ENCODE measurements at regions of chr1 and their contacts with region 1.

Region 1: GRCh38 chr1:40531381-40532061 is at the start of gene ZNF684:
- DNase-seq: peak; percentile 91
- ATAC-seq: peak; percentile 98
- H3K4me3 Mint-ChIP-seq: peak within 1 kb of the TSS; percentile 93
- H3K27ac Mint-ChIP-seq: peak within 1 kb of the TSS; percentile 88
- H3K4me1 Mint-ChIP-seq: peaks cover 14% of the 10 kb centered on the region
- H3K27me3 Mint-ChIP-seq: peaks cover 7% of the 10 kb centered on the region
- CTCF ChIP-seq: no peak
- total RNA-seq, gene ZNF684: 4.2 to 4.4 TPM

Region 2: GRCh38 chr1:40519517-40519916 is 12.0 kb before region 1 on chr1:
- CTCF ChIA-PET with region 1: interaction called, 15 read pairs
- POLR2A ChIA-PET with region 1: interaction called, 4 read pairs
- intact Hi-C with region 1: no loop called
- DNase-seq: no peak
- ATAC-seq: no peak
- H3K4me3 Mint-ChIP-seq: no peak overlapping the region
- H3K27ac Mint-ChIP-seq: no peak overlapping the region
- H3K4me1 Mint-ChIP-seq: no peaks in the 10 kb centered on the region
- H3K27me3 Mint-ChIP-seq: peaks cover 2% of the 10 kb centered on the region
- CTCF ChIP-seq: no peak

Region 3: DNA sequence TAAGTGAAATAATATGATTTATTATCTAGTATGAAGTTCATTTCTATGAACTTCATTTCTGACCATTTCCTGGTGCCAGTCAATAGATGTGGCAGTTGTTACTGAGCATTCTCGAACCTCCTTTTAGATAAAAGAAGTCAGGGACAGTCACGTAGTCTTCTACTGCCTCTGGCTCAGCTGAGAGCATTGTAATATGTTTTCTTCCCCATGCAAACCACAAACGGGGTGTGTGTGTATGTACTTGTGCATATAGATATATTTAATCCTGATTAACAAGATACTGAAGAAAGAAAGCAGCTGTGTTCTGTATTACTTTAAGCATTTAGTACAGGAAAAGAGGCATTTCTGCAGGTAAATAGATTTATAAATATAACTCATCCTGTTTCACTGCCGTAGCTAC is 21.5 kb after region 1 on chr1:
- CTCF ChIA-PET with region 1: interaction called, 20 read pairs
- POLR2A ChIA-PET with region 1: no interaction called
- intact Hi-C with region 1: no loop called
- DNase-seq: no peak
- ATAC-seq: no peak
- H3K4me3 Mint-ChIP-seq: no peak overlapping the region
- H3K27ac Mint-ChIP-seq: no peak overlapping the region
- H3K4me1 Mint-ChIP-seq: no peaks in the 10 kb centered on the region
- H3K27me3 Mint-ChIP-seq: no peaks in the 10 kb centered on the region
- CTCF ChIP-seq: no peak

Region 4: DNA sequence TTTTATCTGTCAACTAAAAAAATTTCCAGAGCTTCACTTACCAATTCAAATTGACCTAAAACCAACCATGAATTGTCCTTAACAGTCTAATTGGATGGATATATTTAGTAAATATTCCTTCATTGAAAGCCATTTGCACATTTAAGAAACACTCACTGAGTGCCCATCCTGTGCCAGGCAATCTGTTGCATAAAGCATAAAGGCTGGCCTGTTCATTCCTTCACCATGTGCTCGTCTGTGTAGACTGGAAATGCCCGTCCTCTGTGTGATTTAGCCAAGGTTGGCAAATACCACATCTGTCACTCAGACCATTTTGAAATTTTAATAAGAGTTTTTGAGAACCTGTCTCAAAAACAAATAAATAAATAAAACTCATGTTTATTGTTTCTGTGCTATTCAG is 57.1 kb after region 1 on chr1:
- CTCF ChIA-PET with region 1: interaction called, 23 read pairs
- POLR2A ChIA-PET with region 1: no interaction called
- intact Hi-C with region 1: no loop called
- DNase-seq: no peak
- ATAC-seq: no peak
- H3K4me3 Mint-ChIP-seq: no peak overlapping the region
- H3K27ac Mint-ChIP-seq: no peak overlapping the region
- H3K4me1 Mint-ChIP-seq: peaks cover 18% of the 10 kb centered on the region
- H3K27me3 Mint-ChIP-seq: peaks cover 7% of the 10 kb centered on the region
- CTCF ChIP-seq: no peak

Region 5: GRCh38 chr1:40620586-40621210 is 89.2 kb after region 1 on chr1:
- CTCF ChIA-PET with region 1: no interaction called
- POLR2A ChIA-PET with region 1: no interaction called
- intact Hi-C with region 1: no loop called
- DNase-seq: no peak
- ATAC-seq: no peak
- H3K4me3 Mint-ChIP-seq: no peak overlapping the region
- H3K27ac Mint-ChIP-seq: no peak overlapping the region
- H3K4me1 Mint-ChIP-seq: no peaks in the 10 kb centered on the region
- H3K27me3 Mint-ChIP-seq: no peaks in the 10 kb centered on the region
- CTCF ChIP-seq: no peak